Head of caudate nucleus (tissue), 42 donors: ENCODE measurements at regions of chr1 and their contacts with region 1.

Region 1: DNA sequence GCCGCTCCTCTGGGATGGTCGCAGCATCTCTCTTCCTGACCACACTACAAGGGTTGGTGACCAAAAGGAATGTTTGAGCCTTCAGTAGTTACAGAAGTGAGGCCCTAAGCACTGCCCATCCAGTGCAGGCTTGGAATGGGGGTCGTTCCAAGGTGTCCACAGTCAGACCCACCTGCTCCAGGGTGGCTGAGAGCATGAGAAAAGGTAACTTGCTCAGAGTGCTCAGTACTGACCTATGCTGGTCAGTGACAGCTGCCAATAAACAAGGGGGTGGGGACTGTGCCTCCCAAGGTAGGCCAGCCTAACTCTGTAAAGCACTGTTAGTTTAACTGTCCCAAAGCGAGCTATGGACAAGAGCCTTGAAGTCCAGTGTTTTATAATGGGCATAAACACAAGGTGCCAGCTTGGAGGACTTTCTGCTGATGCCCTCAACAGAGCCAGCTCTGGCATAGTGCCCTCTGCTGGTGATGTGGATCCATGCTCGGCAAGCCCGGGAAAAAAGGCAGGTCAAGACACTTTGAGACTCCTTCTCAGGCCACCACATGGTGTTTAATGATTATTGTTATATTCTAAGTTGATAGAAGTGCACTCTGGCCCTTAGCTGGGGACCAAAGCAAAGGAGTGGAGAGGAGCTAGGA is 78.1 kb upstream of the DNAH14 start:
- DNase-seq: peak in 41 of 42 donors; percentile 30 to 87 (median 69)

Region 2: DNA sequence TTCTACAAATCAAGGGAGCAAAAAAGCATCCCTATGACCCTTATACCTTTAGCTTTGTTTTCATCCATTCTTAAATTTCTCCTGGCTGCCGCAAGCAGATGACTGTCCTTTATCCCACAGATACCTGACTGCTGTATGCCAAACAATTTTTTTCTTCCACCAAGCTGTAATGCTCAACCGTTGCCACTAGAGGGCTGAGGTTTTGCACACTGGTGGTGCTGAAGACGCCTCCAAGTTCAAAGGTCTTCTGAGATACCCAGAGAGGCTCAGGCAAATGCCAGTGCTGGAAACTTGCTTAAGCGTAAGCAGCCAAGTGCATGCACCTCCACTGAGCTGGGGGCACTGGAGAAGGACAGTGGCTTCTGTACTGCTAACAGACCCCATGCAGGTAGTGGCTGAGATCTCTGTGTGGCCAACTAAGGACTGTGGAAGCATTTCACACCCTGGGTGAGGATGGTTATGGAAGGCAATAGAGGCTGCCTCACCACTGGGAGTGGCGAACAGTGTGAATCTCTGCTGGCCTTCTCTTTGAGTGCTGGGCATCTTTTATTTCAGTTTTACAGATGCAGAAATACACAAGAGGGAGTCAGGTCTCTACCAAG is 206.7 kb before region 1 on chr1:
- intact Hi-C with region 1: loop called (anchors 10 kb)
- DNase-seq: peak in 38 of 42 donors; percentile 9 to 81 (median 54)